ENCODE measurements at regions of chr2 and their contacts with region 1.

Region 1: GRCh38 chr2:62216616-62217015 is 20.7 kb downstream of the B3GNT2 start:
- DNase-seq: peak; percentile 37
- ATAC-seq: no peak
- H3K4me3 Mint-ChIP-seq: no peak overlapping the region
- H3K27ac Mint-ChIP-seq: peak overlapping the region; percentile 76
- H3K4me1 Mint-ChIP-seq: peaks cover 98% of the 10 kb centered on the region
- H3K27me3 Mint-ChIP-seq: no peaks in the 10 kb centered on the region
- CTCF ChIP-seq: no peak

Region 2: GRCh38 chr2:62202019-62202722 is 14.4 kb before region 1 on chr2:
- CTCF ChIA-PET with region 1: interaction called, 6 read pairs
- POLR2A ChIA-PET with region 1: interaction called, 37 read pairs
- intact Hi-C with region 1: no loop called
- DNase-seq: peak; percentile 45
- ATAC-seq: peak; percentile 11
- H3K4me3 Mint-ChIP-seq: peak overlapping the region; percentile 96
- H3K27ac Mint-ChIP-seq: peak overlapping the region; percentile 96
- H3K4me1 Mint-ChIP-seq: peaks cover 84% of the 10 kb centered on the region
- H3K27me3 Mint-ChIP-seq: no peaks in the 10 kb centered on the region
- CTCF ChIP-seq: no peak

Measured in activated CD8-positive, alpha-beta T cell treated with anti-CD3 and anti-CD28 coated beads for 36 hours (primary cell).